ENCODE measurements at regions of chr16 and their contacts with region 1.

Region 1: GRCh38 chr16:53692142-53692541 is 11.5 kb downstream of the RPGRIP1L start:
- DNase-seq: peak; percentile 58 to 73
- H3K4me3 ChIP-seq: no peak overlapping the region
- H3K4me3 Mint-ChIP-seq: no peak overlapping the region
- H3K27ac Mint-ChIP-seq: no peak overlapping the region
- H3K4me1 ChIP-seq: peaks cover 3% of the 10 kb centered on the region; the same call in 1 of the 2 replicates
- H3K4me1 Mint-ChIP-seq: no peaks in the 10 kb centered on the region
- H3K27me3 ChIP-seq: no peaks in the 10 kb centered on the region
- H3K27me3 Mint-ChIP-seq: no peaks in the 10 kb centered on the region
- CTCF ChIP-seq: peak; percentile 74 to 75

Region 2: GRCh38 chr16:53629607-53630312 is 62.4 kb before region 1 on chr16:
- CTCF ChIA-PET with region 1: no interaction called
- POLR2A ChIA-PET with region 1: no interaction called
- intact Hi-C with region 1: no loop called
- DNase-seq: no peak
- H3K4me3 ChIP-seq: no peak overlapping the region
- H3K4me3 Mint-ChIP-seq: no peak overlapping the region
- H3K27ac Mint-ChIP-seq: no peak overlapping the region
- H3K4me1 ChIP-seq: peaks cover 17% of the 10 kb centered on the region
- H3K4me1 Mint-ChIP-seq: peaks cover 15% of the 10 kb centered on the region
- H3K27me3 ChIP-seq: no peaks in the 10 kb centered on the region
- H3K27me3 Mint-ChIP-seq: no peaks in the 10 kb centered on the region
- CTCF ChIP-seq: no peak

Region 3: GRCh38 chr16:53743149-53743566 is 51.0 kb after region 1 on chr16:
- CTCF ChIA-PET with region 1: interaction called, 3 read pairs
- POLR2A ChIA-PET with region 1: no interaction called
- intact Hi-C with region 1: loop called (anchors 5 kb)
- DNase-seq: peak in 1 of 2 experiments; percentile 52
- H3K4me3 ChIP-seq: no peak overlapping the region
- H3K4me3 Mint-ChIP-seq: no peak overlapping the region
- H3K27ac Mint-ChIP-seq: no peak overlapping the region
- H3K4me1 ChIP-seq: peaks cover 19% of the 10 kb centered on the region
- H3K4me1 Mint-ChIP-seq: peaks cover 31% of the 10 kb centered on the region
- H3K27me3 ChIP-seq: no peaks in the 10 kb centered on the region
- H3K27me3 Mint-ChIP-seq: no peaks in the 10 kb centered on the region
- CTCF ChIP-seq: peak; percentile 75 to 78